Activated CD8-positive, alpha-beta memory T cell treated with anti-CD3 and anti-CD28 coated beads, Interleukin-2, amount 10 ng/mL, durations not matched to agents 7 days and 5 days (primary cell): ENCODE measurements at regions of chr7 and their contacts with region 1.

Region 1: DNA sequence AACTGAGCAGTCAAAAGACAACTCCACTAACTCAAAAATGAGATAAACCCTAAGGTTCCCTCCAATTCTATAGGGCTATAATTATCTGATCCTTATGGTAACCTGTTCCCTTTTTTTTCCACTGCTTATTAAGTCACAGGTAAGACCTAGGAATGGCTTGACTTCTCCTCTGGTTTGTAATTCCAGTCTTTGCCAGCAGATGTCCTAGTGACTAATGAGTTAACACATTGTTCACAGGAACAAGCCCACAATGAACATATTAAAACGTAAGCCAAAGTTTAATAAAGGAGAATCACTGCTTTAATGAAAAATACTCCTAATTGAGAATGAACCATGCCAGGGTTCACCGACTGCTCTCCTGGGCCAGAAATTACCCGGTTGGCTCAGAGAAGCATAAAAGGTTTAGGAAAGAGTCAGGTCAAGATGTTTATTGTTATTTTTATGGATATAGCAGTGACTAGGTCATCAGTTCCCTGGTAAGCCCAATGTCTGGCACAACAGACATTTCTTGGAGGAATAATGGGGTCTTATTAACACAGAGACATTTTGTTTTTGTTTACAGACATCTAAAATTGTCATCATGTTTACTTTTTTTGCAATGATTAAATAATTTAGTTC is 120.1 kb downstream of the ELAPOR2 start:
- DNase-seq: peak; percentile 52
- ATAC-seq: peak; percentile 65
- H3K4me3 Mint-ChIP-seq: no peak overlapping the region
- H3K27ac Mint-ChIP-seq: no peak overlapping the region
- H3K4me1 Mint-ChIP-seq: no peaks in the 10 kb centered on the region
- H3K27me3 Mint-ChIP-seq: peaks cover 6% of the 10 kb centered on the region

Region 2: GRCh38 chr7:86846494-86847190 is 92.7 kb before region 1 on chr7:
- CTCF ChIA-PET with region 1: no interaction called
- DNase-seq: no peak
- ATAC-seq: no peak
- H3K4me3 Mint-ChIP-seq: no peak overlapping the region
- H3K27ac Mint-ChIP-seq: no peak overlapping the region
- H3K4me1 Mint-ChIP-seq: no peaks in the 10 kb centered on the region
- H3K27me3 Mint-ChIP-seq: peaks cover 2% of the 10 kb centered on the region

Region 3: GRCh38 chr7:86926732-86927131 is 12.6 kb before region 1 on chr7:
- CTCF ChIA-PET with region 1: interaction called, 12 read pairs
- DNase-seq: no peak
- ATAC-seq: no peak
- H3K4me3 Mint-ChIP-seq: no peak overlapping the region
- H3K27ac Mint-ChIP-seq: no peak overlapping the region
- H3K4me1 Mint-ChIP-seq: no peaks in the 10 kb centered on the region
- H3K27me3 Mint-ChIP-seq: peaks cover 6% of the 10 kb centered on the region

Region 4: DNA sequence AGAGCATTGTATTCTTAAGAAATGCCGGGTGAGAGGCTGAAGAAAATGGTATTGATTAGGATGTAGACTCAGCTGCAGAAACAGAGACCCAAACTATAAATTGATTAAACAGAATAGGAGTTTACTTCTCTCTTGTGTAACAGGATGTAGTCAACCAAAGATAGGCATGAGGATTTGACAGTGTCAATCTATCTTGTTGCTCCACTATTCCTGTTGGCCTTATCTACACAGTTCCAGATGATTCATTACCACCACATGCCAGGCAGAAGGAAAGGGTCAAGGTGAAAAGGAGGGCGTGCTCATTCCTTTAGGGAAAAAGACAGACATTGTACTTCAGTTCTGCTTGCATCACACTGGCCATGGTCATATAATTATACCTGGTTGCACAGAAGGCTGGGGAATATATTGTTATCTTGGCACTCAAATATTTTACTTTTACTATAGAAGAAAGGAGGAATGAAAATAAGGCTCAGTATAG is 201.0 kb after region 1 on chr7:
- CTCF ChIA-PET with region 1: no interaction called
- DNase-seq: no peak
- ATAC-seq: no peak
- H3K4me3 Mint-ChIP-seq: no peak overlapping the region
- H3K27ac Mint-ChIP-seq: no peak overlapping the region
- H3K4me1 Mint-ChIP-seq: peaks cover 14% of the 10 kb centered on the region
- H3K27me3 Mint-ChIP-seq: peaks cover 22% of the 10 kb centered on the region